ENCODE measurements at regions of chr1 and their contacts with region 1.

Region 1: DNA sequence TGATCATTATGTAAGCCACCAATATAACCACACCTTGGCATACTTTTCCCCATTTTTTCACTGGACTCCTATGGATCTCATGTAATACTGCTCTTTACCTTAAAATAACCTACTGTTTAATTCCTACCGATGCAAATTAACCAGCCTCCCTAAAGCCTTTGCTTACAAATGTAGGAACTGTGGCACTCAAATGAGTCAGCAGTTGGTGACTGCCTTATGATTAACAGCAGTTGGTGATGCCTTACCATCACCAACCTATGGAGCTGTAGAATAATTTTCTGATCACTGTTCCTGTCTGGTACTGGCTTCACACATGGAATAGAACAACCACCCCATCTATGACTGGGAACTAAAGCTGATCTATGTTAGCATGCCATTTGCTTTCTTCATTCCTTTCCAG is 7.8 kb upstream of the NUDT17 start:
- DNase-seq: no peak
- H3K4me3 ChIP-seq: no peak overlapping the region
- H3K27ac ChIP-seq: no peak overlapping the region
- H3K4me1 ChIP-seq: no peaks in the 10 kb centered on the region
- H3K27me3 ChIP-seq: no peaks in the 10 kb centered on the region
- CTCF ChIP-seq: no peak

Region 2: GRCh38 chr1:145823565-145824498 is 13.8 kb before region 1 on chr1 and contains the starts of genes POLR3C and RNF115:
- CTCF ChIA-PET with region 1: no interaction called
- POLR2A ChIA-PET with region 1: no interaction called
- intact Hi-C with region 1: loop called (anchors 2 kb)
- DNase-seq: peak; percentile 98
- H3K4me3 ChIP-seq: peak within 1 kb of the TSS; percentile 85
- H3K27ac ChIP-seq: peak within 1 kb of the TSS; percentile 90
- H3K4me1 ChIP-seq: peaks cover 10% of the 10 kb centered on the region
- H3K27me3 ChIP-seq: no peaks in the 10 kb centered on the region
- CTCF ChIP-seq: no peak
- total RNA-seq, gene POLR3C: 49.6 and 50.3 TPM in 2 replicates
- total RNA-seq, gene RNF115: 15.3 and 18.0 TPM in 2 replicates

Measured in A673 (cell line).